ENCODE measurements at regions of chr15 and their contacts with region 1.

Region 1: GRCh38 chr15:101258238-101259144 is 6.6 kb upstream of the CHSY1 start:
- DNase-seq: peak; percentile 62
- ATAC-seq: peak; percentile 77

Region 2: GRCh38 chr15:101014921-101015841 is 243.3 kb before region 1 on chr15:
- intact Hi-C with region 1: loop called (anchors 2 kb)
- DNase-seq: peak; percentile 82
- ATAC-seq: peak; percentile 79

Region 3: GRCh38 chr15:101088788-101089583 is 169.5 kb before region 1 on chr15:
- intact Hi-C with region 1: loop called (anchors 2 kb)
- DNase-seq: peak; percentile 86
- ATAC-seq: peak; percentile 94